CD4-positive, alpha-beta memory T cell (primary cell): ENCODE measurements at regions of chrX and their contacts with region 1.

Region 1: GRCh38 chrX:72245461-72246089 is 6.7 kb upstream of the ERCC6L start:
- DNase-seq: peak in 4 of 5 donors; percentile 20 to 43 (median 28)
- H3K4me3 ChIP-seq: no peak overlapping the region
- H3K4me3 Mint-ChIP-seq: no peak overlapping the region
- H3K27ac ChIP-seq: no peak overlapping the region
- H3K27ac Mint-ChIP-seq: no peak overlapping the region
- H3K4me1 ChIP-seq: no peaks in the 10 kb centered on the region
- H3K4me1 Mint-ChIP-seq: no peaks in the 10 kb centered on the region
- H3K27me3 ChIP-seq: no peaks in the 10 kb centered on the region
- H3K27me3 Mint-ChIP-seq: no peaks in the 10 kb centered on the region

Region 2: DNA sequence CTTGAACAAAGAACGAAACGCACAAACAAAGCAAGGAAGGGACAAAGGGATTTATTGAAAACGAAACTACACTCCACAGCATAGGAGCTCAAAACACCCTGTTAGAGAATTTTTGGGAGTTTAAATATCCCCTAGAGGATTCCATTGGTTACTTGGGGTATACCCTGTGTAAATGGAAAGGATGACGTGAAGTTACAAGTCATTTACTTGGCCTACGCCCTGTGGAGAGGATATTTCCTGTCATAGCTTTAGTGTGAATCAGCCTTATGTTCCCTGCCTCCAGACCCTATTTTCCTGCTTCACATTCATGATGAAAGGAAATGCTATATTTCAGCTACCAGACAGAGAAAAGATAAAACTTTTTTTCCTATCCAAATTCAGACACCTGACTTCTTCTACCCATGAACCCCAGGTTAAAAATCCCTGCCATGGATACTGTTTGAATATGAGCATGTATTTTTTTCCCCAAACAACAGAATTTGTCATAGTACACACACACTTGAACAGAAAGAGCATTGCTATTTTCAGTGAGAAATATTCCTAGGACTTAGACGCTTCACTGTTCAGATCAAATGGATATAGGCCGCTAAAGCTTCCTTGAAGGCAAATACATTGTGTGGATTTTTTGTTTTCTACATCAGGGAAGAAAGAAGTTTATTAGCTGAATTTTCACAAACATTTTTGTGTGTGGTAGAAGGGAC is 43.6 kb before region 1 on chrX:
- CTCF ChIA-PET with region 1: no interaction called
- POLR2A ChIA-PET with region 1: no interaction called
- intact Hi-C with region 1: no loop called
- DNase-seq: no peak
- H3K4me3 ChIP-seq: no peak overlapping the region
- H3K4me3 Mint-ChIP-seq: no peak overlapping the region
- H3K27ac ChIP-seq: no peak overlapping the region
- H3K27ac Mint-ChIP-seq: peak overlapping the region in 1 of 7 donors; percentile 35
- H3K4me1 ChIP-seq: no peaks in the 10 kb centered on the region
- H3K4me1 Mint-ChIP-seq: no peaks in the 10 kb centered on the region
- H3K27me3 ChIP-seq: no peaks in the 10 kb centered on the region
- H3K27me3 Mint-ChIP-seq: no peaks in the 10 kb centered on the region

Region 3: GRCh38 chrX:72269671-72270251 is 24.2 kb after region 1 on chrX:
- CTCF ChIA-PET with region 1: interaction called, 48 read pairs
- POLR2A ChIA-PET with region 1: no interaction called
- intact Hi-C with region 1: no loop called
- DNase-seq: peak in 1 of 5 donors; percentile 60
- H3K4me3 ChIP-seq: no peak overlapping the region
- H3K4me3 Mint-ChIP-seq: no peak overlapping the region
- H3K27ac ChIP-seq: no peak overlapping the region
- H3K27ac Mint-ChIP-seq: peak overlapping the region; percentile 37 to 81 (median 60)
- H3K4me1 ChIP-seq: peaks cover 26% of the 10 kb centered on the region
- H3K4me1 Mint-ChIP-seq: peaks cover 19 to 33% (median 27%) of the 10 kb centered on the region in 4 donors
- H3K27me3 ChIP-seq: no peaks in the 10 kb centered on the region
- H3K27me3 Mint-ChIP-seq: no peaks in the 10 kb centered on the region

Region 4: DNA sequence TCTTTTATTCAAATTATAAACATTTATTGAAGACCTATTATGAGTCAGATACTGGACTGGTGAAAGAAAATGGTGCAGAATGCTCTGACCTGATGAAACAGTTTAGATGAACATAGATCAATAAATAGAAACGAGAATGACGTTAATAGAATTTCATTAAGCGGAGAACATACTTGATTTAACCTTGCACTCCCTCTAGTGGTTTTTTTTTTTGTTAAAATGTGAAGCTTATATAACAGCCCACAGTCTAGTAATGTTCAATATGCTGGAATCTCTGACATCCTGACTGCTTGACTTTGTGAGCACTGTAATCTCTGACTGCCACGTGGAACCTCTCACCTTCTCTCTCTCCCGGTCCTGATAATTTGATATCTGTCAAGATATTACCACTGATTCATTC is 294.7 kb after region 1 on chrX:
- CTCF ChIA-PET with region 1: interaction called, 3 read pairs
- POLR2A ChIA-PET with region 1: no interaction called
- intact Hi-C with region 1: loop called (anchors 10 kb)
- DNase-seq: no peak
- H3K4me3 ChIP-seq: no peak overlapping the region
- H3K4me3 Mint-ChIP-seq: no peak overlapping the region
- H3K27ac ChIP-seq: no peak overlapping the region
- H3K27ac Mint-ChIP-seq: peak overlapping the region in 1 of 7 donors; percentile 4
- H3K4me1 ChIP-seq: no peaks in the 10 kb centered on the region
- H3K4me1 Mint-ChIP-seq: peaks cover 0 to 1% (median 0%) of the 10 kb centered on the region in 4 donors
- H3K27me3 ChIP-seq: no peaks in the 10 kb centered on the region
- H3K27me3 Mint-ChIP-seq: no peaks in the 10 kb centered on the region